Thyroid gland (tissue), 4 donors: ENCODE measurements at regions of chrX and their contacts with region 1.

Region 1: GRCh38 chrX:68828740-68829552 is at the start of gene EFNB1:
- DNase-seq: peak; percentile 91 to 93
- H3K4me3 ChIP-seq: peak within 1 kb of the TSS; percentile 39 to 55 (median 53)
- H3K27ac ChIP-seq: peak within 1 kb of the TSS; percentile 36 to 65 (median 56)
- H3K4me1 ChIP-seq: peaks cover 3 to 4% of the 10 kb centered on the region in 2 donors
- H3K27me3 ChIP-seq: no peaks in the 10 kb centered on the region
- CTCF ChIP-seq: no peak
- POLR2A ChIP-seq: peak; percentile 70 to 99
- total RNA-seq, gene EFNB1: 17.6 to 26.9 (median 20.8) TPM

Region 2: DNA sequence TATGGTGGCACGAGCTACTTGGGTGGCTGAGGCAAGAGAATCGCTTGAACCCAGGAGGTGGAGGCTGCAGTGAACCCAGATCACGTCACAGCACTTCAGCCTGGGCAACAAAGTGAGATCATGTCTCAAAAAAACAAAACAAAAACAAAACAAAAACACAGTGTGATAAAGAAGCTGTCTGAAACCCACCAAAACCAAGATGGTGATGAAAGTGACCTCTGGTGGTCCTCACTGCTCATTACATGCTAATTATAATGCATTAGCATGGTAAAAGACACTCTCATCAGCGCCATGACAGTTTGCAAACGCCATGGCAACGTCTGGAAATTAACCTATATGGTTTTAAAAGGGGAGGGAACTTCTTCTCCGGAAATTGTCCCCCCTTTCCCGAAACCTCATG is 366.3 kb before region 1 on chrX:
- intact Hi-C with region 1: no loop called
- DNase-seq: peak; percentile 5 to 6
- H3K4me3 ChIP-seq: no peak overlapping the region
- H3K27ac ChIP-seq: no peak overlapping the region
- H3K4me1 ChIP-seq: no peaks in the 10 kb centered on the region
- H3K27me3 ChIP-seq: no peaks in the 10 kb centered on the region
- CTCF ChIP-seq: peak in 4 of 6 experiments; percentile 53 to 78 (median 60)
- POLR2A ChIP-seq: no peak

Region 3: DNA sequence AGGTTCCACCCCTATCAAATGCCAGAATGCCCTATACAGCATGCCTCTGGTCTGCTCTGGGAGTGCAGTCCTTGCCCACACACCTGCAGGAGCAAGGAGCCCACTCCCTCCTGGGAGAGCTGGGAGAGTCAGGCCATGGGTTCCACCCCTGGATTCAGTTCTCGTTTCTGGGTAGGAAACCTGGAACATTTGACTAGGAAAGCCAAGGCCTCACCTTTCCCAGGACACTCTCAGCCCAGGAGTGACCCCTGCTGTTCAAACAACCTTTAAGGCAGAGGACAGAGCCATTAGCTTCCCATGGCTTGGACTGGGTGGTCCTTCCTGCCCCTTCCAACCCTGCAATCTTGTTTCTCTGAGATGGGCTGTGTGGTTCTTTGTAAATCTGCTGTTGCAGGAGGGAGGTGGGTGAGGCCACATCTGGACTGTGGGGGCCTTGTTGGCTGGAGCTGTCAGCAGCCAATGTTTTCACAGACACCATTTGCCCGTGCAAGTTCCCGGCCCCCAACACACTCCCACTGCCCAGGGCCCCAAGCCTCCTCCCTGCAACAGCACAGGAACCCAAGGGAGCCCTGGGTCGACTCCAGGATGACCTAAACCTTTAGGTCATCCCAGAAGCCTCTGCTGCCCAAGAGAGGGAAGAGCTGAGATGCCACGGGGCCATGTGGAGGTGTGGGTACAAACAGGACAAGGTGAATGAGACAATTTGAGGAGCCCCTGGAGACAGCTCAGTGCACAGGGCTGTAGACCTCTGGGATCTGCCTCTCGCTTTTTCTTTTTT is 231.9 kb after region 1 on chrX:
- intact Hi-C with region 1: loop called (anchors 2 kb)
- DNase-seq: peak; percentile 52 to 54
- H3K4me3 ChIP-seq: no peak overlapping the region
- H3K27ac ChIP-seq: no peak overlapping the region
- H3K4me1 ChIP-seq: no peaks in the 10 kb centered on the region
- H3K27me3 ChIP-seq: no peaks in the 10 kb centered on the region
- CTCF ChIP-seq: peak in 4 of 6 experiments; percentile 16 to 56 (median 44)
- POLR2A ChIP-seq: no peak

Region 4: GRCh38 chrX:69133921-69134542 is 305.1 kb after region 1 on chrX:
- intact Hi-C with region 1: loop called (anchors 10 kb)
- DNase-seq: peak; percentile 65 to 67
- H3K4me3 ChIP-seq: no peak overlapping the region
- H3K27ac ChIP-seq: no peak overlapping the region
- H3K4me1 ChIP-seq: peaks cover 0 to 25% of the 10 kb centered on the region in 2 donors
- H3K27me3 ChIP-seq: no peaks in the 10 kb centered on the region
- CTCF ChIP-seq: peak in 5 of 6 experiments; percentile 22 to 70 (median 49)
- POLR2A ChIP-seq: no peak

Region 5: GRCh38 chrX:69222103-69223090 is 393.5 kb after region 1 on chrX:
- intact Hi-C with region 1: loop called (anchors 5 kb)
- DNase-seq: peak; percentile 74 to 78
- H3K4me3 ChIP-seq: no peak overlapping the region
- H3K27ac ChIP-seq: no peak overlapping the region
- H3K4me1 ChIP-seq: no peaks in the 10 kb centered on the region
- H3K27me3 ChIP-seq: no peaks in the 10 kb centered on the region
- CTCF ChIP-seq: peak; percentile 36 to 77 (median 69)
- POLR2A ChIP-seq: no peak

Region 6: GRCh38 chrX:69285881-69286564 is 457.1 kb after region 1 on chrX:
- intact Hi-C with region 1: loop called (anchors 10 kb)
- DNase-seq: peak; percentile 64 to 72
- H3K4me3 ChIP-seq: peak overlapping the region in 1 of 3 donors; percentile 26
- H3K27ac ChIP-seq: peak overlapping the region in 2 of 3 donors; percentile 17
- H3K4me1 ChIP-seq: peaks cover 5 to 14% of the 10 kb centered on the region in 2 donors
- H3K27me3 ChIP-seq: no peaks in the 10 kb centered on the region
- CTCF ChIP-seq: peak; percentile 61 to 87 (median 80)
- POLR2A ChIP-seq: no peak

Region 7: GRCh38 chrX:69387567-69388487 is 558.9 kb after region 1 on chrX:
- intact Hi-C with region 1: loop called (anchors 10 kb)
- DNase-seq: peak; percentile 48 to 61
- H3K4me3 ChIP-seq: no peak overlapping the region
- H3K27ac ChIP-seq: no peak overlapping the region
- H3K4me1 ChIP-seq: no peaks in the 10 kb centered on the region
- H3K27me3 ChIP-seq: no peaks in the 10 kb centered on the region
- CTCF ChIP-seq: peak; percentile 37 to 73 (median 64)
- POLR2A ChIP-seq: no peak